ENCODE measurements at regions of chr17 and their contacts with region 1.

Region 1: DNA sequence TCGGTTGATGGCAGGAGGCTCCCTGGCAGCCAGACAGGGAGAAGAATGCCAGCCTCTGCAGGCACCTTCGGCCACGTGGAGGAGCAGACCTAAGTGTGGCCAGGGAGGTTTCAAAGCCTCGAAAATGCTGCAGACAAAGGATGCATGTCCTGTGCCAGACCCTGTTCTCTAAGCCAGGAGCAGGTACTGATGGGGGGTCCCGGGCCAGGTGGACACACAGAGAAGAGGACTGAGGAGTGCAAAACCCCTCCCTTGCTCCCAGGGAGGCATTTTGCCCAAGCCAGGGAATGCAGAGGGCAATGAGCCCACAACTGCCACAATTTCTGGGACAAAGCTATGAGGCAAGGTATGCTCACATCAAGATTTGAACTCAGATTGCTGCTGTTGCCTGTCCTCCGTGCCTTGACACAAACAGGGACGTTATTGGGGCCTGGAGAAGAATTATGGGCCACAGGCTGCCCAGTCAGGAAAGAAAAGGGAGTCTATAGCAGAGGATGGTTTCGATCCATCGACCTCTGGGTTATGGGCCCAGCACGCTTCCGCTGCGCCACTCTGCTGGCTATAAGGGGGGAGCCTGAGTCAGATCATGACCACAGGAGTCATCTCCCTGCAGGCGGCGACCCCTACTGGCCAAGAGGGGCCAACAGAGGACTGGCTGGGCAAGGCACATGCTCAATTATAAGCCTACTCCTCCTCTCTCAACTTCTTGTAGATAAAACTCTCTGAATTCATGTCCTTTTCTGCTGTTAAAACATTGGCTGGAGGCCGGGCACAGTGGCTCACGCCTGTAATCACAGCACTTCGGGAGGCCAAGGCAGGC is 25.1 kb upstream of the FOXK2 start:
- DNase-seq: peak; percentile 77 to 93 (median 85)
- ATAC-seq: peak; percentile 69
- H3K4me3 ChIP-seq: no peak overlapping the region
- H3K4me3 Mint-ChIP-seq: peak overlapping the region; percentile 91
- H3K27ac ChIP-seq: peak overlapping the region in 1 of 2 donors; percentile 14
- H3K27ac Mint-ChIP-seq: peak overlapping the region; percentile 92
- H3K4me1 ChIP-seq: peaks cover 38% of the 10 kb centered on the region
- H3K4me1 Mint-ChIP-seq: peaks cover 22% of the 10 kb centered on the region
- H3K27me3 ChIP-seq: no peaks in the 10 kb centered on the region
- H3K27me3 Mint-ChIP-seq: no peaks in the 10 kb centered on the region
- CTCF ChIP-seq: peak; percentile 58

Region 2: GRCh38 chr17:82351716-82352488 is 142.5 kb before region 1 on chr17:
- CTCF ChIA-PET with region 1: no interaction called
- POLR2A ChIA-PET with region 1: no interaction called
- intact Hi-C with region 1: loop called (anchors 2 kb)
- DNase-seq: peak; percentile 68 to 93 (median 78)
- ATAC-seq: peak; percentile 92
- H3K4me3 ChIP-seq: no peak overlapping the region
- H3K4me3 Mint-ChIP-seq: no peak overlapping the region
- H3K27ac ChIP-seq: no peak overlapping the region
- H3K27ac Mint-ChIP-seq: no peak overlapping the region
- H3K4me1 ChIP-seq: peaks cover 13% of the 10 kb centered on the region
- H3K4me1 Mint-ChIP-seq: no peaks in the 10 kb centered on the region
- H3K27me3 ChIP-seq: peaks cover 0 to 4% of the 10 kb centered on the region in 2 experiments
- H3K27me3 Mint-ChIP-seq: peaks cover 5% of the 10 kb centered on the region
- CTCF ChIP-seq: peak; percentile 84

Region 3: DNA sequence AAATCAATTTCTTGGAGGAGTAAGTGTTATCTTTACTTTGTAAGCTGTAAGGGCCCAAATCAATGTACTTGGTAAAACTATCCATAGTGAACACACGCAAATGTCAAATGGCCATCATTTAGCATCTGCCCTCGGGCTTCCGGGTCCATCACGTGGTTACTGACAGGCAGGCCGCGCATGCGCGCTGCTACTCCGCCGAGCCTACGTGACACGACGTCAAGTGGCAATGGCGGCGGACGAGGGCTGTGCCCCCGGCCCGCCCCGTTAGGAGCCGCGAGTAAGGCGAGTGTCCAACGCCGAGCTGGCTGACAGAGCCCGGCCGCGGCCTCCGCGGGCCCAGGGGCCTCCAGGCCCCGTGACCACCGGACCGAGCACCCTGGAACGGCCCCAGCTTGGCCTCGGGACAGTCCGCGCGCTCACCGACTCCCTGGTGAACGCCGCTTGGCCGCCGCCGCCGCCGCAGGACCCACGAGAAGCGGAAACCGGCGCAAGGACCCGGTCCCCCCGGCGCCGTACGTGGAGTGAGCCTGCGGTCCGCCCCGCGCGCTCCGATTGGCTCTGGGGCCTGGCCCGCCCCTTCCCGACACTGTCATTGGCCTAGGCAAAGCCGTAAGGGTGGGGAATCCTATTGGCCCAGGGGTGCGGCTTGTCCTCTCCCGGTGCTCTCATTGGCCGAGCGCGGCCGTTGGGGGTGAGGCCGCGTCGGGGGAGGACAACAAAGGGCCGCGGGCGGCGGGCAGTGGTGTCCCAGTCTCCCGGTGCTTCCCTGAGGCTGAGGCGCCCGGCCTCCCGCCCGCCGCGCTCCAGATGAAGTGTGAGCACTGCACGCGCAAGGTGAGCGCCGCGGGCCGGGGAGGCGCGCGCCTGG is 36.2 kb before region 1 on chr17 and contains the start of gene NARF:
- CTCF ChIA-PET with region 1: no interaction called
- POLR2A ChIA-PET with region 1: interaction called, 4 read pairs
- intact Hi-C with region 1: loop called in 1 of 2 experiments (anchors 2 kb)
- DNase-seq: peak; percentile 89 to 98 (median 96)
- ATAC-seq: peak; percentile 96
- H3K4me3 ChIP-seq: peak within 1 kb of the TSS; percentile 89
- H3K4me3 Mint-ChIP-seq: peak within 1 kb of the TSS; percentile 91
- H3K27ac ChIP-seq: peak within 1 kb of the TSS; percentile 95 to 99
- H3K27ac Mint-ChIP-seq: peak within 1 kb of the TSS; percentile 99
- H3K4me1 ChIP-seq: peaks cover 39% of the 10 kb centered on the region
- H3K4me1 Mint-ChIP-seq: peaks cover 39% of the 10 kb centered on the region
- H3K27me3 ChIP-seq: no peaks in the 10 kb centered on the region
- H3K27me3 Mint-ChIP-seq: no peaks in the 10 kb centered on the region
- CTCF ChIP-seq: no peak
- total RNA-seq, gene NARF: 57.1 to 62.0 TPM

Region 4: GRCh38 chr17:82518826-82519810 is 24.7 kb after region 1 on chr17 and contains the start of gene FOXK2:
- CTCF ChIA-PET with region 1: no interaction called
- POLR2A ChIA-PET with region 1: interaction called, 22 read pairs
- intact Hi-C with region 1: loop called (anchors 1 to 2 kb)
- DNase-seq: peak; percentile 84 to 97 (median 92)
- ATAC-seq: peak; percentile 98
- H3K4me3 ChIP-seq: peak within 1 kb of the TSS; percentile 66
- H3K4me3 Mint-ChIP-seq: peak within 1 kb of the TSS; percentile 88
- H3K27ac ChIP-seq: peak within 1 kb of the TSS; percentile 50 to 71
- H3K27ac Mint-ChIP-seq: peak within 1 kb of the TSS; percentile 84
- H3K4me1 ChIP-seq: peaks cover 38% of the 10 kb centered on the region
- H3K4me1 Mint-ChIP-seq: peaks cover 25% of the 10 kb centered on the region
- H3K27me3 ChIP-seq: no peaks in the 10 kb centered on the region
- H3K27me3 Mint-ChIP-seq: no peaks in the 10 kb centered on the region
- CTCF ChIP-seq: no peak
- total RNA-seq, gene FOXK2: 32.5 to 33.7 TPM

Region 5: GRCh38 chr17:82551779-82552457 is 57.5 kb after region 1 on chr17:
- CTCF ChIA-PET with region 1: no interaction called
- POLR2A ChIA-PET with region 1: interaction called, 3 read pairs
- intact Hi-C with region 1: loop called (anchors 5 kb)
- DNase-seq: peak; percentile 59 to 88 (median 76)
- ATAC-seq: peak; percentile 100
- H3K4me3 ChIP-seq: no peak overlapping the region
- H3K4me3 Mint-ChIP-seq: no peak overlapping the region
- H3K27ac ChIP-seq: no peak overlapping the region
- H3K27ac Mint-ChIP-seq: peak overlapping the region; percentile 56
- H3K4me1 ChIP-seq: peaks cover 24% of the 10 kb centered on the region
- H3K4me1 Mint-ChIP-seq: peaks cover 40% of the 10 kb centered on the region
- H3K27me3 ChIP-seq: no peaks in the 10 kb centered on the region
- H3K27me3 Mint-ChIP-seq: no peaks in the 10 kb centered on the region
- CTCF ChIP-seq: peak; percentile 77